Stomach (tissue), 19 donors: ENCODE measurements at regions of chr11 and their contacts with region 1.

Region 1: GRCh38 chr11:126446581-126446980 is 91.1 kb downstream of the ST3GAL4 start:
- DNase-seq: no peak
- H3K4me3 ChIP-seq: no peak overlapping the region
- H3K27ac ChIP-seq: no peak overlapping the region
- H3K4me1 ChIP-seq: no peaks in the 10 kb centered on the region
- H3K27me3 ChIP-seq: peaks cover 0 to 28% (median 0%) of the 10 kb centered on the region in 3 donors
- CTCF ChIP-seq: no peak
- EP300 ChIP-seq: no peak
- POLR2A ChIP-seq: no peak

Region 2: GRCh38 chr11:126403658-126404057 is 42.9 kb before region 1 on chr11:
- intact Hi-C with region 1: no loop called
- DNase-seq: no peak
- H3K4me3 ChIP-seq: no peak overlapping the region
- H3K27ac ChIP-seq: no peak overlapping the region
- H3K4me1 ChIP-seq: peaks cover 0 to 26% (median 5%) of the 10 kb centered on the region in 4 donors
- H3K27me3 ChIP-seq: no peaks in the 10 kb centered on the region
- CTCF ChIP-seq: no peak
- EP300 ChIP-seq: no peak
- POLR2A ChIP-seq: no peak

Region 3: DNA sequence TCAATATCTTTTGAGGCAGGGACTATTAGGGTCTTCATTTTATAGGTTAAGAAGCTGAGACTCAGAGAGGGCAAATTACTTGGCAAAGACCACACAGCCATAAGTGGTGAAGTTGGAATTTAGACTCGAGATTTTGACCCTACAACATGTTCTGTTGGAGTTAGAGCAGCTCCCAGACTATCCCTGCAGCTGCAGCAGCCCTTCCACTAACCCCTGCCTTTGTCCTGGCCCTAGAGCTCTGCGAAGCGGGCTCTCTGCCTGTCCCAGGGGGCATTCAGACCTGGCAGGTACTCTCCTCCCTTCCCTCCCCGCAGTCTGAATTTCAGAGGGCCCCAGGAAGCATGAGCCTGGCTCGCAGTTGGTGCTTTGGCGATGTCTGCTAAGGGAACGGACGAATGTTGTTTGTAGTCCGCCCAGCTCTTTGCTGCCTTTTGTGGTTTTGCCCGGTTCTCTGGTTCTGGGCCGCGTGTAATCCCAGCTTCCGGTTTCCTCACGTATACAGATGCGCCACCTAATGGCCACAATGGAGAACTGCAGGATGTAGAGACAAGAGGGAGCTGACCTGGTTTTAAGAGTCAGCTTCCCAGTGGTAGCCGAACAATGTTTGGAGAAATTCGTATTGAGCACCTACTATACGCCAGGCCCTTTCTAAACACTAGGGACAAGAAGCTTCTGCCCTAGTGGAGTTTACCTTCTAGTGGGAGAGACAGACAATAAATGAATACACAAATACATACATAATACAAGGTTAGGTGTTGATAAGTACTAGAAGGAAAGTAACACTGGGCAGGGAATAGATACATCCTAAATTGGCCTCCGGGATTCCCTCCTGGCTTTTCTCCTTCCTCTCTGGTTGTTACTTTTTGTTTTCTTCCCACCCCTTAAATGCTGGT is 34.1 kb after region 1 on chr11:
- intact Hi-C with region 1: loop called (anchors 5 kb)
- DNase-seq: peak; percentile 85 to 95
- H3K4me3 ChIP-seq: no peak overlapping the region
- H3K27ac ChIP-seq: peak overlapping the region in 4 of 5 donors; percentile 13 to 63 (median 44)
- H3K4me1 ChIP-seq: peaks cover 4 to 7% (median 5%) of the 10 kb centered on the region in 4 donors
- H3K27me3 ChIP-seq: peaks cover 0 to 8% (median 0%) of the 10 kb centered on the region in 3 donors
- CTCF ChIP-seq: peak in 6 of 7 experiments; percentile 82 to 98 (median 96)
- EP300 ChIP-seq: no peak
- POLR2A ChIP-seq: no peak

Region 4: GRCh38 chr11:126739499-126740145 is 293.0 kb after region 1 on chr11:
- intact Hi-C with region 1: no loop called
- DNase-seq: no peak
- H3K4me3 ChIP-seq: no peak overlapping the region
- H3K27ac ChIP-seq: no peak overlapping the region
- H3K4me1 ChIP-seq: peaks cover 0 to 12% (median 7%) of the 10 kb centered on the region in 4 donors
- H3K27me3 ChIP-seq: peaks cover 0 to 44% (median 0%) of the 10 kb centered on the region in 3 donors
- CTCF ChIP-seq: no peak
- EP300 ChIP-seq: no peak
- POLR2A ChIP-seq: no peak

Region 5: DNA sequence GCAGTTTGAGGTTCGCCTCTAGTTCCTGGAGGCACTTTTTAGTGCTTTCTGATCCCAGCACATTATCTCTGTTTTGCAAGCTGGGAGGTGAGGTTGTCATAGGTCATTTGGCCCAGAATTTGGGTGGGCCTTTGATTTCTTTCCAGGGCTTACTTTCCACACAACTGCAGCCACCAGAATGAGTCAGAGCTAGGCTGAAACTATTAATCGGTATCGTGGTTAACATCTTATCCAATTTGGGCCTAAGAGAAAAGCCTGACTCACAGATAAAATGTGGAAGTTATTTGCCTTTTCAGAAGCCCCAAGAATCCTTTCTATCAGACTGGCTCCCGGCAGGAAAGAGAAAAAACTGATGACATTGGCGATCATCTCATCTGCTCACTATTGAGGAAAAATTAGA is 387.6 kb after region 1 on chr11:
- intact Hi-C with region 1: no loop called
- DNase-seq: no peak
- H3K4me3 ChIP-seq: no peak overlapping the region
- H3K27ac ChIP-seq: no peak overlapping the region
- H3K4me1 ChIP-seq: peaks cover 0 to 19% (median 2%) of the 10 kb centered on the region in 4 donors
- H3K27me3 ChIP-seq: no peaks in the 10 kb centered on the region
- CTCF ChIP-seq: no peak
- EP300 ChIP-seq: no peak
- POLR2A ChIP-seq: no peak